Heart right ventricle (tissue), 16 donors: ENCODE measurements at regions of chr22 and their contacts with region 1.

Region 1: DNA sequence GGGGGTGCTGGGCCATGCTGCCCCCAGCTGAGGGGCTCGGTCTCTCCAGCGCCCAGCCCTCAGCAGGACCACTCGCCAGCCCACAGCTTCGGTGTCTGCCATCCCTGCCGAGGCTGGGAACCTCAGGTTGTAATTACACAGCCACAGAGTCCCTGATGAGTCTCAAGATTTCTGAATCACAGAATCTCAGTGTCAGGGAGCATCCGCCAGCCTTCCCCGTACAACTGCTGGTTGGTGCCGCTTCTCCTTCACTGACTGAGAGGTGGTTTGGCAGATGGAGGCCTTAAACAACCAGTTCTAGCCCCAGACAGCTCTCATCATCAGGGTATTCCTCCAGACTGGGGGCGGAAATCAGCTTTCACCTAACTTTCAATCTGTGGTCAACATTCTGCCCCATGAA is 13.7 kb downstream of the PHF21B start:
- DNase-seq: no peak
- ATAC-seq: no peak
- H3K4me3 ChIP-seq: no peak overlapping the region
- H3K27ac ChIP-seq: no peak overlapping the region
- H3K4me1 ChIP-seq: peaks cover 0 to 11% (median 3%) of the 10 kb centered on the region in 9 donors
- H3K27me3 ChIP-seq: peaks cover 0 to 40% (median 4%) of the 10 kb centered on the region in 7 donors
- CTCF ChIP-seq: no peak

Region 2: DNA sequence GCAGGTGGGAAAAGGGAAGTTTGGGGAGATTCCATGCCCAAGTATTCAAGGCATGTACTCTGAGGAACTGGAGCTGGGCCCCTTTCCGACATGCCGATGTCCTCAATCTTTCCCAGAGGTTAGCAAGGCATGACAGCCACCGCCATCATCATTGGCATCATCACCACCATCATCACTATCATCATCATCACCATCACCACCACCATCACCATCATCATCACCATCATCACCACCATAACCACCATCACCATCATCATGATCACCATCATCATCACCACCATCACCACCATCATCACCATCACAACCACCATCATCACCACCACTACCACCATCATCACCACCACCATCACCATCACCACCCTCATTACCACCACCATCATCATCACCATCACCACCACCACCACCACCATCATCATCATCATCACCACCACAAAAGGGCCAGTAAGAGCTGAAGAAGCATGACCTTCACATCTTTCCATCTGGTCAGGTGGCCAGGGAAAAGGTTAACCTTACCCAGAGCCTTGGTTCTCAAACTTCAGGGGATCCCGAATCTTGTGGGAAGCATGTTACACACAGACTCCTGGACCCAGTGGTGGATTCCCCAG is 12.1 kb before region 1 on chr22:
- intact Hi-C with region 1: loop called in 1 of 10 experiments (anchors 1 kb)
- DNase-seq: no peak
- ATAC-seq: no peak
- H3K4me3 ChIP-seq: no peak overlapping the region
- H3K27ac ChIP-seq: no peak overlapping the region
- H3K4me1 ChIP-seq: no peaks in the 10 kb centered on the region
- H3K27me3 ChIP-seq: peaks cover 0 to 26% (median 10%) of the 10 kb centered on the region in 7 donors
- CTCF ChIP-seq: no peak

Region 3: GRCh38 chr22:45019861-45020655 is 23.9 kb after region 1 on chr22:
- intact Hi-C with region 1: loop called in 1 of 10 experiments (anchors 1 kb)
- DNase-seq: no peak
- ATAC-seq: no peak
- H3K4me3 ChIP-seq: no peak overlapping the region
- H3K27ac ChIP-seq: no peak overlapping the region
- H3K4me1 ChIP-seq: no peaks in the 10 kb centered on the region
- H3K27me3 ChIP-seq: peaks cover 0 to 80% (median 45%) of the 10 kb centered on the region in 7 donors
- CTCF ChIP-seq: no peak